ENCODE measurements at regions of chr12 and their contacts with region 1.

Region 1: DNA sequence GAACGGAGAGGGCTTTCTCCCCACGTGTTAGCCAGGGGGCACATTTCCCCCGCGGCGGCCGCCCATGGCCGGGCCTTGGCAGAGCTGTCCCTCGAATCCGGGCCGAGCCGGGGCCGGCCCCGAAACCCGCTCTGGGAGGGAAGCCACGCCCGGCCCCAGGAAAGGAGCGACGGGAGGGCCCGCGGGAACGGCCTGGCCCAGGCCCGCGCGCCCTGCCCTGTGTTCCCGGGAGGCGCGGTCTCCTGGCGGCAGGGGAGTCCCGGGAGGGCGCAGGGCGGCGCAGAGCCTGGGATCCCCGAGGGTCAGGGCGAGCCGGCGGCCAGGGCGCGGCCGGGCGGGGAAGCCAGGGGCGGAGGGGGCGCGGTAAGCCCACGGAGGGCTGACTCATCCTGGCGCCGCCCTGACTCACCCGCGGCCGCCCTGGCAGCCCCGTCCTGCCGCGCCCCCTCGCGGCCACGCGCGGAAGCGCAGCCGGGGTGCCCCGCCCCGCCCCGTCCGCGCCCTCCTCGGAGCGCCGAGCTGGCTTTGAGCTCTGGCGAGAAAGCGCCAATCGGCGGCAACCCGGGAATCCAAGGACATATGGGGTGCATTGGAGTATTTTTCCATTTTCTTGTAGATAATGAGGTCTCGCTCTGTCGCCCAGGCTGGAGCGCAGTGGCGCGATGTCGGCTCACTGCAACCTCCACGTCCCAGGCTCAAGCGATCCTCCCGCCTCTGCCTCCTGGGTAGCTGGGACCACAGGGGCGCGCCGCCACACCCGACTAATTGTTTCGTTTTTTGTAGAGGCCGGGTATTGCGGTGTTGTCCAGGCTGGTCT is 31.8 kb upstream of the PLEKHG6 start:
- DNase-seq: peak; percentile 82 to 93 (median 87)
- H3K4me3 ChIP-seq: peak overlapping the region; percentile 51
- H3K27ac ChIP-seq: peak overlapping the region; percentile 60 to 85
- H3K4me1 ChIP-seq: peaks cover 8% of the 10 kb centered on the region
- H3K27me3 ChIP-seq: no peaks in the 10 kb centered on the region
- CTCF ChIP-seq: peak; percentile 53 to 99 (median 98)
- EP300 ChIP-seq: no peak
- POLR2A ChIP-seq: no peak

Region 2: DNA sequence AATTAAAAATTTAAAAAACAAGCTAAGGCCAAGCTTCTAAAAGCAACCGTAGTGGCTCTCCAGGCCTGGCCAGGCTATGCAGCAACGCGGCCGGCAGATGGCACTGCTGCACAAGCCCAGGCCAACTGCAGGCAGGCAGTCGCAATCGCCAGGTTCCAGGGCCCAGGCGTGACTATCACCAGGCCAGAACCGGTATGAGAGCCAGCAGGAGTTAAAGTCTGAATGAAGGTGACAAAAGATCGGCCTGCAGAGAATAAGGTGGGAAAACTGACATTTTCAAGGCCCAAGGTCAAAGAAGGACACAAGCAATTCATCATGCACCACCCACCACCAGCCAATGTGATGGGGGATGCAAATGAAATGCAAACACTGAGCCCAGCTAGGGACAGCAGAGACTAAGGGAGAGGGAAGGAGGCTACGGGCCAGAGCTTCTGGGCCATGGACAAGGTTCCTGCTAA is 290.0 kb before region 1 on chr12:
- intact Hi-C with region 1: loop called (anchors 5 to 10 kb)
- DNase-seq: peak; percentile 60 to 82 (median 73)
- H3K4me3 ChIP-seq: no peak overlapping the region
- H3K27ac ChIP-seq: no peak overlapping the region
- H3K4me1 ChIP-seq: no peaks in the 10 kb centered on the region
- H3K27me3 ChIP-seq: no peaks in the 10 kb centered on the region
- CTCF ChIP-seq: peak; percentile 81 to 87 (median 82)
- EP300 ChIP-seq: no peak
- POLR2A ChIP-seq: no peak

Region 3: DNA sequence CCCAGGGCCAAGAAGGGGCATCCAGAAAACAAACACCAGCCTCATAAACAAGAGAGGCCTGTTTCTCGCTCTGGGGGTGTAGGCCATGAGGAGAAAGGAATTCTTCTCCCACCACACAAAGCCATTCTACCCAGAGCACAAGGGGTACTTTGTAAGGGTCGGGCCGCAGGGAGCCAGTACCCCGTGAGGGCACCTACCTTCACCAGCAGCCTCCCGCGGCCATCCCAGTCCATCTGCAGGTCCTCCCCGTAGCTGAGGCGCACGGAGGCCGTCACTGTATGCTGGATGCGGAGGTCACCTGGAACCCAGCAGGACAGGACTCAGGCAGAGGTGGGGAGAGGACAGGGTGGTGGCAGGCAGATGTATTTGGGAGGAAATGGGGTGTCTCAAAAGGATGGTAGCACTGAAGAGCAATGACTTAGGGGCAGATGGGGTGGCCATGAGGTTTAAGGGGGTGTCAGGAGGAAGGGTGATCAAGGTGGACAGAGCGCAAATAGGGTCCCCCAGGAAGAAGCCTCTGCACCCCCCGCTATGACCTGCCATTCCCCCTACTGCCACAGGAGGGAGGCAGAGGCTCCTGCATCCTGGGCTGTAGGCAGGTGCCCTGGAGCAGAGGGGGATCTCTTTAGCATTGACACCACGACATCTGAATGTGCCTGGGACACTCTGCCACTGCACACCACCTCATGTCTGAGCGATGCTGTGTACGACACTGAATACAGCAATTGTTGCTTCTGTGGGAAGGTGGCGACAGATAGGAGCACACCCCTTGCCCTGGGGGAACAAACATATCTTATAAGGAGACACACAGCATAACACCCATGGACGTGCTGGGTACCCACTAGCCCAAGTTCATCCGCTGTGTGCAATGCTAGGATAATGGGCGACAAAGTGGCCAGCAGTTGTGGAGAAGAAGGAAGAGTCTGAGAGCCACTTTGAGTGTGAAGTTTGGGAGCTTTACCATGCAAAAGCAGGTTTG is 215.6 kb before region 1 on chr12:
- intact Hi-C with region 1: loop called in 3 of 4 experiments (anchors 5 to 10 kb)
- DNase-seq: peak in 3 of 5 donors; percentile 34 to 48 (median 35)
- H3K4me3 ChIP-seq: no peak overlapping the region
- H3K27ac ChIP-seq: no peak overlapping the region
- H3K4me1 ChIP-seq: no peaks in the 10 kb centered on the region
- H3K27me3 ChIP-seq: no peaks in the 10 kb centered on the region
- CTCF ChIP-seq: peak; percentile 24 to 55 (median 52)
- EP300 ChIP-seq: no peak
- POLR2A ChIP-seq: no peak

Region 4: GRCh38 chr12:6195665-6196535 is 82.7 kb before region 1 on chr12:
- intact Hi-C with region 1: loop called (anchors 2 kb)
- DNase-seq: peak; percentile 82 to 92 (median 89)
- H3K4me3 ChIP-seq: no peak overlapping the region
- H3K27ac ChIP-seq: peak overlapping the region in 1 of 2 donors; percentile 22
- H3K4me1 ChIP-seq: peaks cover 6% of the 10 kb centered on the region
- H3K27me3 ChIP-seq: no peaks in the 10 kb centered on the region
- CTCF ChIP-seq: peak; percentile 83 to 96 (median 95)
- EP300 ChIP-seq: no peak
- POLR2A ChIP-seq: no peak

Region 5: GRCh38 chr12:6229224-6230218 is 49.1 kb before region 1 on chr12:
- intact Hi-C with region 1: loop called in 1 of 4 experiments (anchors 2 kb)
- DNase-seq: peak in 4 of 5 donors; percentile 37 to 50 (median 49)
- H3K4me3 ChIP-seq: no peak overlapping the region
- H3K27ac ChIP-seq: peak overlapping the region; percentile 23 to 52
- H3K4me1 ChIP-seq: peaks cover 3% of the 10 kb centered on the region
- H3K27me3 ChIP-seq: no peaks in the 10 kb centered on the region
- CTCF ChIP-seq: no peak
- EP300 ChIP-seq: peak; percentile 23
- POLR2A ChIP-seq: no peak